ENCODE measurements at regions of chr2 and their contacts with region 1.

Region 1: GRCh38 chr2:84970868-84971509 is at the start of gene KCMF1:
- DNase-seq: peak; percentile 78
- H3K4me3 Mint-ChIP-seq: peak within 1 kb of the TSS; percentile 100
- H3K27ac Mint-ChIP-seq: peak within 1 kb of the TSS; percentile 100
- H3K4me1 Mint-ChIP-seq: peaks cover 43% of the 10 kb centered on the region
- H3K27me3 Mint-ChIP-seq: no peaks in the 10 kb centered on the region
- total RNA-seq, gene KCMF1: 90.5 to 94.1 TPM

Region 2: DNA sequence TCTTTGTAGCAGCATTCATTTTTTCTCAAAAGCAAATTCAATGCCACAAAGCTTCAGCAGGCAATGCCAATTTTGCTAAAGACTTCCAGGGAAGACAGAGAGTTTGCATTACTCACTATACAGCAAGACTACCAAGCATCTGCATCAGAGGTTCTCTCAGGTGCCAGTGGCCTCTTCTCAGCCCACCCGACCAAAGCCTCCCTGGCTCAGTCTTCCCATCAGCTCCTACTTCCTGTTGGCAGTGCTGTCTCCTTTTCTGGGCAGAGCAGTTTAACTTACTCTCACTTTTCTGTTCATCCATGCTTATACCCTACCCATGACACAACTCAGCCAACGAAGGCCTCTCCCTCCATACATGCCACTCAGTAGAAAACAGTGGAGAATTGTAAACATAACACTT is 247.2 kb before region 1 on chr2:
- CTCF ChIA-PET with region 1: no interaction called
- POLR2A ChIA-PET with region 1: no interaction called
- intact Hi-C with region 1: no loop called
- DNase-seq: no peak
- H3K4me3 Mint-ChIP-seq: no peak overlapping the region
- H3K27ac Mint-ChIP-seq: no peak overlapping the region
- H3K4me1 Mint-ChIP-seq: peaks cover 21% of the 10 kb centered on the region
- H3K27me3 Mint-ChIP-seq: no peaks in the 10 kb centered on the region

Region 3: DNA sequence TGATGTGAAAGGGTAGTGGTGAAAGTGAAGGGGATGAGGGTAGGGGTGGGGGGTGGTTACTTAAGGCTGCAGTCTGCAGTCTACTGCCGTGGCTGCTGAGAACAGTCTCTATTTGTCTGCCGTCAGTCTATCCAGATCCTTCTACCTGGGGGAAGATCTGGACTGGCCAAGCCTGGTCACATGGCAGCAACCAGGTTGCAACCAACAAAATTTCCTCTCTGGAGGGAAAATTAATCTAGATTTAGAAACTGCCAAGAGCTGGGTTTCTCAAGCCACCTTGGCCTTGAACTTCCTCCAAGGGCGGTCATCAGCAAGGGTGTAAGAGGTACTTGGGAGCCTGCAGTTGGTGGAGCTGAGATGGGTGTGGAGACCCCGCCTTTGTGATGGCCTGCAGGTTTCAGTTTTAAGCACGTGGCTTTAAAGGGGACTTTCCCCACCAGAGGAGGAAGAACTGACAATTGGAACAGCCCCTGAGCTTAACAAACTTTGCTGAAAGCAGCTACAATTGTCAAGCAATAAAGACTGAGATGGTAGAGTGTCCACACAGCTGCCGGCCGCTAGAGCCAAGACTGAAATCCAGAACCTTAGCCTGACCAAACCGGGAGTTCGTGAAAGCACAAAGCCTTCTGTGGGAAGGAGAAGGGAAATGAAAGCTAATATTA is 31.4 kb before region 1 on chr2:
- CTCF ChIA-PET with region 1: interaction called, 7 read pairs
- POLR2A ChIA-PET with region 1: interaction called, 41 read pairs
- intact Hi-C with region 1: loop called (anchors 1 kb)
- DNase-seq: peak; percentile 87
- H3K4me3 Mint-ChIP-seq: peak overlapping the region; percentile 62
- H3K27ac Mint-ChIP-seq: peak overlapping the region; percentile 93
- H3K4me1 Mint-ChIP-seq: peaks cover 66% of the 10 kb centered on the region
- H3K27me3 Mint-ChIP-seq: no peaks in the 10 kb centered on the region

Region 4: DNA sequence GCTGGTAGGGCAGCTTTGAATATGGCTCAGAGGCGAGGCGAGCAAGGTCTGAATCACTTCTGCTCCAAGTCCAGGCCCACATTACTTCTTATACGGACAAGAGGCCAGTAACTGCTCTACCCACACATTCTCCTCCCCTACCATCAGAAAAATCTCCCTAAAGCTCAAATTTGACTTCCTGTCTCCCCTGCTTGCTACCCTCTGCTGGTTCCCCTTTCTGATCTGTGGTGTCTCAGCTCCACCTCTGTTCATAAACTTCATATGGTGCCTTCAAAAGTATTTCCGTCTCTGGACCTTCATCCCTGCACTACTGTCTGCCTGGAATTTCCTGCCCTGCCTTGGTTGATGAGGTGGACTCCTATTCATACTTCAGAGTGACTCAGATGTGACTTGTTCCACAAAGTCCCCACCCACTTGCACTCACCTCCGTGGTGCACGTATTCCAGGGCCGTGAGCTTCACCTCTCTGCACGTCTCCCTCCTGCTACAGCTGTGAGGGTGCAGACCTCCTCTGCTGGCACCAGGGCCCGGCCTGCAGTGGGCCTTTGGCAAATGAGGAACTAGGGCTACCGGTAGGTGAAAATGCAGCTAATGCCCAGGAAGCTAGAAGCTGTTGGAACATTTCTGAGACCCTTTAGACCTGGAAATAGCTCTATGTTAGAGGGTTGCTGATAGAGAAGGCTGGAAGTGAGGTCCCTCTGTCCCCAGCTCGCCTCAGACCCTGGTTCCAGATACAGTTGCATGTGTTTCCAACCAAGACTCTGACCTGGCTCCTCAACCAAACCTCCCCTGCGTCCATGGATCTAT is 24.6 kb before region 1 on chr2:
- CTCF ChIA-PET with region 1: interaction called, 20 read pairs
- POLR2A ChIA-PET with region 1: interaction called, 43 read pairs
- intact Hi-C with region 1: loop called (anchors 1 kb)
- DNase-seq: peak; percentile 88
- H3K4me3 Mint-ChIP-seq: peak overlapping the region; percentile 51
- H3K27ac Mint-ChIP-seq: peak overlapping the region; percentile 93
- H3K4me1 Mint-ChIP-seq: peaks cover 44% of the 10 kb centered on the region
- H3K27me3 Mint-ChIP-seq: no peaks in the 10 kb centered on the region

Region 5: DNA sequence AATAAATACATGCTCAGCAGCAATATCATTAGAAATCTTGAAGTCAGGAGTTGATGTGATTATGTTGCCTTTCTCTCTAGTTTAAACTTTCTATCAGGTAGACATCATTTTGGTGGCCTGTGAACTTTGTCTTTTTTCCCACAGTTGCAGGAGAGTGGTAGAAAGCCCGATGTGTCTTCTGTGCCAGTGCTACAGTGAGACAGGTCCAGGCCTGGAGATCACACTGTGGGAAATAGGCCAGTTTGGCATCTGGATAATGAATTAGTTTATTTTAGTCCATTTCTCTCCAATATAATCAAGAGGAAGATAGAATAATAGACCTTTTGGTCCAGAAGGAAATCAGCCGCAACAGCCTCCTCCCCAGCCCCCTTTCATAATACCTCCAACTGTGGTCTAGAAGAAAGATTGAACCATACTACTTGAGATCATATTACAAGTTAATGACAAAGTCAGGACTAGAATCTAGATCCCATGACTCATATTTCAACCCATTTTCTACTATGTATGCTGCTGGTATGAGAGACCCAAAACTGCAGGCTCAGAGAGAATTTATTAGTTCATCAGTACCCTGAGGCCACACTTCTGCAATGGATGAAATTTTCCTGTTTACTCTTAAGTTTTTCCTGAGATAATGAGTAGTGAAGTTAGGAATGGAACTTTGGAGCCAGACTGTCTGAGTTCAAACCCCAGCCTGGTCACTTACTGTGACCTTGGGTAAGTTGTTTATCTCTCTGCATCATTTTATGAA is 20.6 kb after region 1 on chr2:
- CTCF ChIA-PET with region 1: interaction called, 4 read pairs
- POLR2A ChIA-PET with region 1: interaction called, 5 read pairs
- intact Hi-C with region 1: loop called (anchors 2 kb)
- DNase-seq: no peak
- H3K4me3 Mint-ChIP-seq: no peak overlapping the region
- H3K27ac Mint-ChIP-seq: no peak overlapping the region
- H3K4me1 Mint-ChIP-seq: peaks cover 40% of the 10 kb centered on the region
- H3K27me3 Mint-ChIP-seq: no peaks in the 10 kb centered on the region

Region 6: DNA sequence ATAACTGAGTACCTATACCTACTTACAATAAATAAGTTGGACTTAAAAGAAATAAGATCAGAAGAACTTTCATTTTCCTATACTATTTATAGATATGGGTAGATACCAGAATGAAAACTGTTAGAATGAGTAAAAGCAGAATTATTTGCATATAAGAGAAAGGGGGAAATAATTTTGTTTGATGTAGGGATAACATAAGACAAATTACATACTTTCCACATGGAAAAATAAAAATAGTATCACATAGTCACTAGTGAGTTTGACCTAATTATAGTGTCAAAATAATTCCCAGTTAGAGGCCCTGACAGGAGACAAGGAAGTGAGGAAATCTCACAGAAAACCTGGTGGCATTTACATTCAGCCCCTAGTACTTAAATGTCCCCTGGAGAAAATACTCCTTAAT is 28.6 kb after region 1 on chr2:
- CTCF ChIA-PET with region 1: interaction called, 3 read pairs
- POLR2A ChIA-PET with region 1: interaction called, 5 read pairs
- intact Hi-C with region 1: loop called (anchors 5 kb)
- DNase-seq: no peak
- H3K4me3 Mint-ChIP-seq: no peak overlapping the region
- H3K27ac Mint-ChIP-seq: peak overlapping the region; percentile 91
- H3K4me1 Mint-ChIP-seq: peaks cover 77% of the 10 kb centered on the region
- H3K27me3 Mint-ChIP-seq: no peaks in the 10 kb centered on the region

Region 7: GRCh38 chr2:85017411-85018048 is 46.5 kb after region 1 on chr2:
- CTCF ChIA-PET with region 1: interaction called, 11 read pairs
- POLR2A ChIA-PET with region 1: interaction called, 5 read pairs
- intact Hi-C with region 1: loop called (anchors 1 kb)
- DNase-seq: no peak
- H3K4me3 Mint-ChIP-seq: no peak overlapping the region
- H3K27ac Mint-ChIP-seq: peak overlapping the region; percentile 66
- H3K4me1 Mint-ChIP-seq: peaks cover 70% of the 10 kb centered on the region
- H3K27me3 Mint-ChIP-seq: no peaks in the 10 kb centered on the region